ENCODE measurements at regions of chr7 and their contacts with region 1.

Region 1: GRCh38 chr7:7761340-7761980 is 43.1 kb upstream of the RPA3 start:
- DNase-seq: no peak
- H3K4me3 Mint-ChIP-seq: peak overlapping the region; percentile 83
- H3K27ac Mint-ChIP-seq: peak overlapping the region; percentile 76
- H3K4me1 Mint-ChIP-seq: peaks cover 34% of the 10 kb centered on the region
- H3K27me3 Mint-ChIP-seq: no peaks in the 10 kb centered on the region

Region 2: GRCh38 chr7:7424151-7424873 is 337.1 kb before region 1 on chr7:
- CTCF ChIA-PET with region 1: no interaction called
- intact Hi-C with region 1: loop called (anchors 10 kb)
- DNase-seq: peak; percentile 52
- H3K4me3 Mint-ChIP-seq: peak overlapping the region; percentile 42
- H3K27ac Mint-ChIP-seq: no peak overlapping the region
- H3K4me1 Mint-ChIP-seq: no peaks in the 10 kb centered on the region
- H3K27me3 Mint-ChIP-seq: no peaks in the 10 kb centered on the region

Region 3: GRCh38 chr7:7640221-7641128 is 121.0 kb before region 1 on chr7 and contains the start of gene UMAD1:
- CTCF ChIA-PET with region 1: interaction called, 4 read pairs
- intact Hi-C with region 1: loop called (anchors 1 kb)
- DNase-seq: peak; percentile 99
- H3K4me3 Mint-ChIP-seq: peak within 1 kb of the TSS; percentile 92
- H3K27ac Mint-ChIP-seq: peak within 1 kb of the TSS; percentile 98
- H3K4me1 Mint-ChIP-seq: peaks cover 41% of the 10 kb centered on the region
- H3K27me3 Mint-ChIP-seq: no peaks in the 10 kb centered on the region
- total RNA-seq, gene UMAD1: 13.8 to 14.3 TPM

Region 4: DNA sequence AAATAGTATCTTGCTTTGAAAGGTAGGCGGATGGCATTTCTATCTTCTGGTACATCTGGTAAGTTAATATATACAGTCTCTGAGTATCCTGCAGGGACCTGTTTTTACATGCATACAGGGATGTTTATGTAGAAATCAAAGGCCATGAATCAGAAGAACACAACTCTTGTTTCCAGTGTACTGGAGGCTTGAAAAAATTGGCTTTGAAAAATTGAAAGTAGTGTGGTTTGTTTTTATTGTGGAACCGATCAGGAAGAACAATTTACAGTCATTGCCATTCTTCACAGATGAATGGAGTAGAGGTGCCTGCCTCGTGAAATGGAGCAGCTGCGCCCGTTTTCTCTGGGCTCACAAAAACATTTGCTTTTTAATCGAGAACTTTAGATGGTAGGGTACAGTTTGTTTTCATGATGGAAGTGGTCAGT is 10.9 kb after region 1 on chr7:
- CTCF ChIA-PET with region 1: interaction called, 7 read pairs
- intact Hi-C with region 1: loop called (anchors 1 kb)
- DNase-seq: peak; percentile 53
- H3K4me3 Mint-ChIP-seq: peak overlapping the region; percentile 69
- H3K27ac Mint-ChIP-seq: no peak overlapping the region
- H3K4me1 Mint-ChIP-seq: peaks cover 28% of the 10 kb centered on the region
- H3K27me3 Mint-ChIP-seq: no peaks in the 10 kb centered on the region

Region 5: DNA sequence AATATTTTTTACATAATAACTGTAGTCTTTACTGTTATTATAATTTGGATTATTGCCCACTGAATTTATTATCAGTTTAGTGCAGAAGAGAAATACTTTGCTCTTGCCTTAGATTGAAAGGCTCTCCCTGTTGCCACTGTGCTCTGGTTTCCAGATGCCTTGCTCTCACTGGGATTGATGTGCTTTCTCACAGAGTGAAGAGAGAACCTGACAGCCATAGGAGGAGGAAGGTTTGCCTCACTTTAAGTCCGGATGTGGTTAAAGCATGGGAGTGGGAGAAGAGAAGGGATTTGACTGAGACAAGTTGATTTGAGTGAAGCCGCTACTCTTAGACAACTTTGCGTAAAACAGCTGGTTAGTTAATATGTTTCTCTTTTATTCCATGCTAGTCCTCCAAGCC is 25.1 kb after region 1 on chr7:
- CTCF ChIA-PET with region 1: no interaction called
- intact Hi-C with region 1: no loop called
- DNase-seq: no peak
- H3K4me3 Mint-ChIP-seq: no peak overlapping the region
- H3K27ac Mint-ChIP-seq: no peak overlapping the region
- H3K4me1 Mint-ChIP-seq: peaks cover 9% of the 10 kb centered on the region
- H3K27me3 Mint-ChIP-seq: no peaks in the 10 kb centered on the region

Region 6: GRCh38 chr7:7920481-7920880 is 159.0 kb after region 1 on chr7:
- CTCF ChIA-PET with region 1: no interaction called
- intact Hi-C with region 1: no loop called
- DNase-seq: peak; percentile 46
- H3K4me3 Mint-ChIP-seq: no peak overlapping the region
- H3K27ac Mint-ChIP-seq: no peak overlapping the region
- H3K4me1 Mint-ChIP-seq: peaks cover 24% of the 10 kb centered on the region
- H3K27me3 Mint-ChIP-seq: no peaks in the 10 kb centered on the region

Region 7: GRCh38 chr7:8190119-8190895 is 428.8 kb after region 1 on chr7:
- CTCF ChIA-PET with region 1: no interaction called
- intact Hi-C with region 1: loop called (anchors 1 kb)
- DNase-seq: peak; percentile 84
- H3K4me3 Mint-ChIP-seq: no peak overlapping the region
- H3K27ac Mint-ChIP-seq: no peak overlapping the region
- H3K4me1 Mint-ChIP-seq: peaks cover 10% of the 10 kb centered on the region
- H3K27me3 Mint-ChIP-seq: no peaks in the 10 kb centered on the region

Measured in activated naive CD4-positive, alpha-beta T cell treated with anti-CD3 and anti-CD28 coated beads for 36 hours (primary cell).